AG04449 (cell line): ENCODE measurements at regions of chr5 and their contacts with region 1.

Region 1: GRCh38 chr5:96752341-96753016 is 55.3 kb downstream of the ERAP1 start:
- DNase-seq: no peak
- H3K4me3 ChIP-seq: no peak overlapping the region
- CTCF ChIP-seq: peak; percentile 35

Region 2: DNA sequence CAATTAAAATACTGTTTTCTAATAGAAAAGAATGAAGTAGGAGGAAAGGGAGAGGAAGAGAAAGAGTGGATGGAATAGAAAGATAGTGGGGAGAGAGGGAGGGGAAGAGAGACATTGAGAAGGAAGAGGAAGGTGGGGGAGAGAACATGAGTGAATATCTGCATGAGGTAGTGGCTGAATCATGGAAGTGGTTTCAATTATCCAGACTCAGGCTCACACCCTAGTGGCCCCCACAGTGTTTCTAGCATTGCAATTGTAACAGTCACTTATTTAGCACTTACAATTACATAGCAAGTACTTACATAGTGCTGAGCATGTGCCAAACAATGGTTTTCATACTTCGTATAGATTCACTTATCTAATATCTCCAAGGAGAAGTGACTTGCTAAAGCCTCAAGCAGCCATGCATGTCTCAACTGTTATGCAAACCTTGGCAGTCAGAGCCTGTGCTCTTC is 17.6 kb before region 1 on chr5:
- CTCF ChIA-PET with region 1: interaction called, 12 read pairs
- POLR2A ChIA-PET with region 1: no interaction called
- DNase-seq: peak; percentile 42
- H3K4me3 ChIP-seq: no peak overlapping the region
- CTCF ChIP-seq: no peak

Region 3: DNA sequence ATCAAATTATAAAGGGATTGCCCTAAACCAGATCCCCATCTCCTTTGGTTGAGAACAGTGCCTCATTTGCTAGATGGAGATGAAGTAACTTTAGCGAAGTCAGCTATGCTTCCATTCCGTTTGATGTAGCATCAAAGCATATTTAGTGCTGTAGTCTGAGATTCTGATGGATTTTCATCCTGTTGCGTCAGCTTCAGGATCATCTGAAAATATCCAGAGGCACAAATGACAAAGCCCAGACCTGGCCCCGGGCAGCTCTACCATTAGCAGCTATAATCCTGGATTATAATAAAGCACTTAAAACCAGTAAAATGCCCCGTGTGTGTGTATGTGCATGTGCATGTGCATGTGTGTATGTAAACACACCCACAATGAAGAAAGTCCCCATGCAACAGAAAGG is 10.5 kb after region 1 on chr5:
- CTCF ChIA-PET with region 1: interaction called, 56 read pairs
- POLR2A ChIA-PET with region 1: no interaction called
- DNase-seq: no peak
- H3K4me3 ChIP-seq: no peak overlapping the region
- CTCF ChIP-seq: no peak

Region 4: GRCh38 chr5:96771395-96771794 is 18.9 kb after region 1 on chr5:
- CTCF ChIA-PET with region 1: interaction called, 56 read pairs
- POLR2A ChIA-PET with region 1: no interaction called
- DNase-seq: no peak
- H3K4me3 ChIP-seq: no peak overlapping the region
- CTCF ChIP-seq: no peak

Region 5: GRCh38 chr5:97142521-97143254 is 390.2 kb after region 1 on chr5 and contains the start of gene LIX1:
- CTCF ChIA-PET with region 1: interaction called, 19 read pairs
- POLR2A ChIA-PET with region 1: no interaction called
- DNase-seq: no peak
- H3K4me3 ChIP-seq: no peak within 1 kb of the TSS
- CTCF ChIP-seq: peak; percentile 40